Esophagus muscularis mucosa (tissue), 4 donors: ENCODE measurements at regions of chr16 and their contacts with region 1.

Region 1: DNA sequence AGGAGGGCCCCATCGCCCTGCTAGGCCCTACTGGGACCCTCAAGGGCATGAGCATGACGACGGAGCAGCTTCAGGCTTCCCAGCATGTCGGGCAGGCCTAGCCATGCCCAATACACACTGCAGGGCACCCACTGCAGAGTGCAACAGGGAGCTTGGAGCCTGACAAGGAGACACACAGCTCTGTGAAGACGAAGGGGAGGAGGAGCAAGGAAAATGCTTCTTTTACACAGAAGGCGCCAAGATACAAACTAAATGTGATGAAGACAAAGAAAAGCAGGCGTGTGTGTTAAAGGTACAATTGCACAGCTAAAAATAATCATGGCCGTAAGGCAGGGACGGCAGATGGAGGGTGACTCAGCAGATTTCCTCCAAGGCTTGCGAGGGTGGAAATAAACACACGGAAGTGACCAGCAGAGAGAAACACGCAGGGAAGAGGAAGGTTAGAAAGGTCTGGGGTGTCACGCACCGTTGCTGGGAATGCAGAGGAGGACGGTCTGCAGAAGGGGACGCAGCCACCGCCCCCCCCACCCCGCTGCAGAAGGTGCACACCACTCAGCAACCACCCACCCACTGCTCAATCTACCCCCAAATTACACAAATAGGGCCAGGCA is 108.5 kb downstream of the ZNF778 start:
- DNase-seq: no peak
- H3K4me3 ChIP-seq: peak overlapping the region; percentile 16 to 27 (median 27)
- H3K27ac ChIP-seq: peak overlapping the region; percentile 75 to 82 (median 79)
- H3K4me1 ChIP-seq: peaks cover 80 to 85% (median 83%) of the 10 kb centered on the region in 4 donors
- H3K27me3 ChIP-seq: no peaks in the 10 kb centered on the region
- CTCF ChIP-seq: no peak
- EP300 ChIP-seq: no peak
- POLR2A ChIP-seq: no peak

Region 2: DNA sequence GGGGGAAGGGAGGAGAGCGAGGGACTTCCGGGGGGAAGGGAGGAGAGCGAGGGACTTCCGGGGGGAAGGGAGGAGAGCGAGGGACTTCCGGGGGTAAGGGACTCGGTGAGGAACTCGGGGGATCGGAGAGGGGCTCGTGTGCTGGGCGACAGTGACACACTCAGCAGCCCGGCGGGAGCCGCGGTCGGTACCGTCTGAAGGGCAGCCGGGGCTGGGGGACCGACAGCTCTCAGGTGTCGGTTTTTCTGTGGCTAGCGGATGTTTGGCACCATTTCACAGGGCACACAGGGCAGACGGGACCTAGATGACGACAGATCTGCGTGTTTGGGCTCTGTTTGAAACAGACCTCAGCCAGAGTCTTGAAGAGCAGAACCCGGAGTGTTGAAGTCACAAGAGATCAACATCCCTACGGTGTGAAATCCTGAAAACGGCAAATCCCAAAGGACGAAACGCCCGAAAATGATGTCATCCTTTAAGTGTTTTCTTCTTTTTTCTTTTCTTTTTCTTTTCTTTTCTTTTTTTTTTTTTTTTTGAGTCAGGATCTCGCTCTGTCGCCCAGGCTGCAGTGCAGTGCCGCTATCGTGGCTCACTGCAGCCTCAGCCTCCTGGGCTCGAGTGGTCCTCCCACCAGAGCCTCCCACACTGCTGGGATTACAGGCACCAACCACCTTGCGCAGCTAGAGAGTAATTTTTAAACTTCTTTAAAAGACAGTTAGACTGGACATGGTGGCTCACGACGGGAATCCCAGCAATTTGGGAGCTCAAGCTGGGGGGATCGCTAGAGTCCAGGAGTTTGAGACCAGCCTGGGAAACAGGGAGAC is 84.6 kb before region 1 on chr16:
- intact Hi-C with region 1: no loop called
- DNase-seq: no peak
- H3K4me3 ChIP-seq: peak overlapping the region; percentile 78 to 84 (median 82)
- H3K27ac ChIP-seq: peak overlapping the region; percentile 94 to 97 (median 94)
- H3K4me1 ChIP-seq: peaks cover 4 to 20% (median 17%) of the 10 kb centered on the region in 4 donors
- H3K27me3 ChIP-seq: no peaks in the 10 kb centered on the region
- CTCF ChIP-seq: no peak
- EP300 ChIP-seq: no peak
- POLR2A ChIP-seq: peak; percentile 79

Region 3: GRCh38 chr16:89268987-89269735 is 56.8 kb before region 1 on chr16:
- intact Hi-C with region 1: no loop called
- DNase-seq: no peak
- H3K4me3 ChIP-seq: no peak overlapping the region
- H3K27ac ChIP-seq: peak overlapping the region; percentile 12 to 68 (median 30)
- H3K4me1 ChIP-seq: no peaks in the 10 kb centered on the region
- H3K27me3 ChIP-seq: no peaks in the 10 kb centered on the region
- CTCF ChIP-seq: no peak
- EP300 ChIP-seq: no peak
- POLR2A ChIP-seq: no peak

Region 4: DNA sequence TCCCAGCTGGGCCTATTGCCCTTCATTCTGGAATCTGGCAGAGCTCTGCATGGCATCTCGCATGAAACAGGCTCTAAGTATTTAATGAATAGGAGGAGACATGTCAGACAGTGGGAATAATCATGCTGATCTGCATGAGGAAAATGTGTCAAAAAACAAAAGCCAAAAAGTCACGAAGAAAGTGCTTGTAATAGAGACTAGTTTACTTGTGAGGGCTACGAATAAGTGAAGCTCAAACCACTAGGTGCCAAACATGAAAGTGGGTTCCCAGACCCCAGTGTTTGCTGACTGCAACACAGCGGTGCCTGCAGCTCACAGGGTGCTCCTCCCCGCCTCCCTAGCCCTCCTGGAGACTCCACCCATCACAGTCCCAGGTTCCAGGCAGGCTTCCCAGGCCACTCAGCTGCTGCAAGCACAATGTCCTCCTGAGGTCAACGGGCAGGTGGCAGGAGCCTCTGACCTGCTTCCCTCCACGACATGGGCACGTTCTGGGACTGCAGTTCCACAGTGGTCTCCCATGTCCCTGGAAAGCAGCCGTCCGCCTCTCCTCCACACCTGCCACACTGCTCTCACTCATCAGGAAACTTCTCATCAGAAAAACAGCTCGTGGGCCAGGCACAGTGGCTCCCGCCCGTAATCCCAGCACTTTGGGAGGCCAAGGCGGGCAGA is 67.9 kb after region 1 on chr16:
- intact Hi-C with region 1: loop called (anchors 5 kb)
- DNase-seq: no peak
- H3K4me3 ChIP-seq: no peak overlapping the region
- H3K27ac ChIP-seq: peak overlapping the region; percentile 76 to 86 (median 82)
- H3K4me1 ChIP-seq: peaks cover 43 to 80% (median 69%) of the 10 kb centered on the region in 4 donors
- H3K27me3 ChIP-seq: no peaks in the 10 kb centered on the region
- CTCF ChIP-seq: no peak
- EP300 ChIP-seq: no peak
- POLR2A ChIP-seq: no peak

Region 5: DNA sequence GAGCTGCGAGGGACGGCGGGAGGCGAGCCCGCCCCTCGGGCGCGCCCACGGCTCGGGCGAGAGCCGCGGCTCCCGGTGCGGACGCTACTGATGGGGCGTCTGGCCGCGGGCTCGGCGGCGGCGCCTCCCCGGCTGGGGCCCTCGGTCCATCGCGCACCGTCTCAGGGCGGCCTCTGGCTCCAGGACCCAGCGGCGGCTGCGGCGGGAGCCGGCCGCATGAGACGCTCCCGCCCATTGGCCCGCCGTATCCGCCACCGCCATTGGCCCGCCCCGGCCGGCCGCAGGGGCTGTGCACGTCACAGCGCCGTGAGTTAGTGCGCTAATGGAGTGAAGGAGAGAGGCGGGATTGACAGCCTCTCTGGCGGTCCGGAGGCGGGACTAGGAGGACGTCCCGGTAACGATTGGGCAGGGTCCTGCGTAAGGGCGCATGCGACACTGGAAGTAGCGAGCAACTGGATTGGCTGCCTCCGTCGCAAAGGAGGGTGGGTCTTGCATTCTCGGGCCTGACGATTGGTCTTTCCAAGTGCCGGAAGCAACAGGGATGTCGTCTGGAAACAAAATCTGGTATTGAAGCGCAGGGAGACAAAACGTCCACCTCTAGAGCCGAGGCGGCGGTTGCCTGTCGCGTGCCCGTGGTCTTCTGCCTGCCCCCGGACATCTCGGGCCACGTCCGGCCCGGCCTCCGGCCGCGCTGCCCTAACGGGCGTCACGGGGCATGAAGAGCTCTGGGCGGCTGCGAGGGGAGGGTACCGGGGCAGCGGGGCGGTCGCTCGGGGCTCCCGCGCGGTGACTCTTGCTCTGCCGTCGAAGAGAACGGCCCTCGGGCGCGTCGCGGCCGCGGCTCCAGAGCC is 164.6 kb after region 1 on chr16 and contains the start of gene ANKRD11:
- intact Hi-C with region 1: loop called (anchors 5 kb)
- DNase-seq: peak; percentile 100
- H3K4me3 ChIP-seq: peak within 1 kb of the TSS; percentile 75 to 98 (median 86)
- H3K27ac ChIP-seq: peak within 1 kb of the TSS; percentile 98 to 100 (median 99)
- H3K4me1 ChIP-seq: peaks cover 42 to 54% (median 50%) of the 10 kb centered on the region in 4 donors
- H3K27me3 ChIP-seq: no peaks in the 10 kb centered on the region
- CTCF ChIP-seq: peak in 1 of 3 experiments; percentile 20
- EP300 ChIP-seq: no peak
- POLR2A ChIP-seq: peak; percentile 67
- total RNA-seq, gene ANKRD11: 60.8 to 119 (median 105) TPM

Region 6: GRCh38 chr16:89507834-89508590 is 182.0 kb after region 1 on chr16 and contains the start of gene SPG7:
- intact Hi-C with region 1: loop called (anchors 5 kb)
- DNase-seq: peak; percentile 95
- H3K4me3 ChIP-seq: peak within 1 kb of the TSS; percentile 80 to 97 (median 88)
- H3K27ac ChIP-seq: peak within 1 kb of the TSS; percentile 90 to 96 (median 95)
- H3K4me1 ChIP-seq: peaks cover 38 to 46% (median 44%) of the 10 kb centered on the region in 4 donors
- H3K27me3 ChIP-seq: no peaks in the 10 kb centered on the region
- CTCF ChIP-seq: no peak
- EP300 ChIP-seq: no peak
- POLR2A ChIP-seq: peak; percentile 83
- total RNA-seq, gene SPG7: 58.8 to 94.3 (median 83.3) TPM

Region 7: GRCh38 chr16:89560378-89561141 is 234.6 kb after region 1 on chr16 and contains the start of gene RPL13:
- intact Hi-C with region 1: loop called (anchors 5 kb)
- DNase-seq: peak; percentile 98
- H3K4me3 ChIP-seq: peak within 1 kb of the TSS; percentile 75 to 98 (median 82)
- H3K27ac ChIP-seq: peak within 1 kb of the TSS; percentile 94 to 99 (median 98)
- H3K4me1 ChIP-seq: peaks cover 42 to 75% (median 67%) of the 10 kb centered on the region in 4 donors
- H3K27me3 ChIP-seq: peaks cover 0 to 4% (median 0%) of the 10 kb centered on the region in 4 donors
- CTCF ChIP-seq: peak in 1 of 3 experiments; percentile 30
- EP300 ChIP-seq: no peak
- POLR2A ChIP-seq: peak; percentile 93
- total RNA-seq, gene RPL13: 4,039 to 6,804 (median 5,312) TPM